Panc1 (cell line): ENCODE measurements at regions of chr12 and their contacts with region 1.

Region 1: DNA sequence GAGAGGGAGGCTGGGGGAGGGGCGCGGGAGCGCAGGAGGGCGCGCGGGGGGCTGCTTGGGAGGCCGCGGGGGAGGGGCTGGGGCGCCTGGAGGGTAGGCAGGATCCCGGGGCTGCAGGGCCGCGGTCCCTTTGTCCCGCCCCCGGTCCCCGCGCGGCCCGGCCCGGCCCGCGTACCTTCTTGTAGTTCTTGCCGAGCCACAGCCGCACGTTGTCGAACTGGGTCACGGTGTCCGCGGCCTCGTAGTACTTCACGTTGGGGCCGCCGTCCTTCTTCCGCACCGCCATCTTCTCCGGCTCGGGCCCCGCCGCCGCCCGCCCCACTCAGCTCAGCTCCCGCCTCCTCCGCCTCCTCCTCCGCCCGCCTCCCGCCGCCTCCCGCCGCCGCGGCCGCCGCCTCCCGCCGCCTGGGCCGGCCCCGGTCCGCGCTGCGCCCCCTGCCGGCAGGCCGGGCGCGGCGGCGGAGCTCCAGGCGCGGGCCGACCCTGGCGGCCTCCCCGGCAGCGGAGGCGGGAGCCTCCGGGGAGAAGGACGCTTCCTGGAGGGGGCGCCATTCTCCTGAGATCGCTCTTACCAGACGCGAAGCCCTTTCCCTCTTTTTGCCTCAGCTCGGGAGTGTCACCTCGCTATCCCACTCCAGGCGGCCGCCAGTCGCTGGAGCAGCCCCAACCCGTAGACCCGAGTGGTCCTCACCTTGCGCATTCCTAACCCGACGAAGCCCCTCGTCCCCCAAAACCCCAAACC is at the start of gene SMARCC2:
- DNase-seq: peak; percentile 64
- ATAC-seq: peak; percentile 91
- H3K4me3 ChIP-seq: peak within 1 kb of the TSS; percentile 77 to 98
- H3K27ac ChIP-seq: peak within 1 kb of the TSS; percentile 95
- H3K4me1 ChIP-seq: peaks cover 12% of the 10 kb centered on the region
- H3K27me3 ChIP-seq: no peaks in the 10 kb centered on the region
- CTCF ChIP-seq: peak; percentile 99
- total RNA-seq, gene SMARCC2: 129 TPM

Region 2: DNA sequence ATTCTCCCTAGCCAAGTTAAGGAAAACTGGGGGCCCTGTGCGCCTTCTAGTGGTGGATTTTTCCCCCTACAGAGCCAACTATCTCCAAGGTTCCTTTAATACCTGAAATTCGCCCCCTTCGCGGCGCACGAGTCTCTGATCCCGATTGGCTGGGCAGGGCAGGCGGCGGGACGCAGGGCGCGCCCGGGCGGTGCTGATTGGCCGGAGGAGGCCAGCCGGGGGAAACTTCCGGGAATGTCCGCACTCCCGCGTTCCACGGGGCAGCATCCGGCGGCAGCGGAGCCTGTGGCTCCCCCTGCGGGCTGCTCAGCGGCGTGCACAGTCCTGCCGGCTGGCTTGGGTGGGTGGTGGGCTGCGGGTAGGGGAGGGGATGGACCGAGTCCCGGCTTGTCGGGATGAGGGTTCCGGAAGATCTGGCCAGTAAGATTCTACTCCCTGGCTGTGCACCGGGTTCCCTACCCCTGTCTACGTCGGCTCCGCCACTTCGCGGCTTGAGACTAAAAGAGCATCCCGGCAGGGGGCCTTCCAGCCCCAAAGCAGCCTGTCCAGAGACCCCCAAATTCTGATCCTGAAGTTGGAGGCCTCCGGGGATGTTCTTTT is 34.9 kb after region 1 on chr12 and contains the start of gene NABP2:
- CTCF ChIA-PET with region 1: interaction called, 41 read pairs
- POLR2A ChIA-PET with region 1: interaction called, 3 read pairs
- in situ Hi-C with region 1: no loop called
- intact Hi-C with region 1: loop called (anchors 2 kb)
- DNase-seq: peak; percentile 96
- ATAC-seq: peak; percentile 89
- H3K4me3 ChIP-seq: peak within 1 kb of the TSS; percentile 71 to 81
- H3K27ac ChIP-seq: peak within 1 kb of the TSS; percentile 94
- H3K4me1 ChIP-seq: peaks cover 16% of the 10 kb centered on the region
- H3K27me3 ChIP-seq: no peaks in the 10 kb centered on the region
- CTCF ChIP-seq: peak; percentile 99
- total RNA-seq, gene NABP2: 99.6 TPM